ENCODE measurements at regions of chr3 and their contacts with region 1.

Region 1: DNA sequence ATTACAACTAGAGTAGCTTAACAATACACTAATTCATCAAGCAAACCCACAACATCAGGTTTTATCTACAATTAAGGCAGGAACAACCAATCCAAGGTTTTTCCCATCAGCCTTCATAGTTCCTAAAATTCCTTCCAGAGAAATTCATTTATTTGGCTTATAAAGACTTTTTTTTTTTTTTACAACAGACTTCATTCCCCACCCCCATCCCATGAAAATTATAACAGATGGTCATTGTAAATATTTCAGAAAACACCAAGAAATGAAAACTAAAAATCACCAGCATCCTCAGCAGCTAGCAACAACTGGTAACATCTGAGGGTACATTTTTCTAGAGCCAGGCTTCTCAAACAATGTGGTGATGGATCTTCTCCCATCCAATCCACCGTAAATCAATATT is 11.0 kb downstream of the SH3BP5 start:
- DNase-seq: no peak
- H3K4me3 ChIP-seq: no peak overlapping the region
- H3K27ac ChIP-seq: no peak overlapping the region
- H3K4me1 ChIP-seq: peaks cover 41% of the 10 kb centered on the region
- H3K27me3 ChIP-seq: no peaks in the 10 kb centered on the region
- CTCF ChIP-seq: no peak

Region 2: GRCh38 chr3:15345608-15346137 is 24.3 kb after region 1 on chr3:
- CTCF ChIA-PET with region 1: no interaction called
- POLR2A ChIA-PET with region 1: no interaction called
- intact Hi-C with region 1: no loop called
- DNase-seq: no peak
- H3K4me3 ChIP-seq: no peak overlapping the region
- H3K27ac ChIP-seq: no peak overlapping the region
- H3K4me1 ChIP-seq: peaks cover 5% of the 10 kb centered on the region
- H3K27me3 ChIP-seq: no peaks in the 10 kb centered on the region
- CTCF ChIP-seq: no peak

Region 3: DNA sequence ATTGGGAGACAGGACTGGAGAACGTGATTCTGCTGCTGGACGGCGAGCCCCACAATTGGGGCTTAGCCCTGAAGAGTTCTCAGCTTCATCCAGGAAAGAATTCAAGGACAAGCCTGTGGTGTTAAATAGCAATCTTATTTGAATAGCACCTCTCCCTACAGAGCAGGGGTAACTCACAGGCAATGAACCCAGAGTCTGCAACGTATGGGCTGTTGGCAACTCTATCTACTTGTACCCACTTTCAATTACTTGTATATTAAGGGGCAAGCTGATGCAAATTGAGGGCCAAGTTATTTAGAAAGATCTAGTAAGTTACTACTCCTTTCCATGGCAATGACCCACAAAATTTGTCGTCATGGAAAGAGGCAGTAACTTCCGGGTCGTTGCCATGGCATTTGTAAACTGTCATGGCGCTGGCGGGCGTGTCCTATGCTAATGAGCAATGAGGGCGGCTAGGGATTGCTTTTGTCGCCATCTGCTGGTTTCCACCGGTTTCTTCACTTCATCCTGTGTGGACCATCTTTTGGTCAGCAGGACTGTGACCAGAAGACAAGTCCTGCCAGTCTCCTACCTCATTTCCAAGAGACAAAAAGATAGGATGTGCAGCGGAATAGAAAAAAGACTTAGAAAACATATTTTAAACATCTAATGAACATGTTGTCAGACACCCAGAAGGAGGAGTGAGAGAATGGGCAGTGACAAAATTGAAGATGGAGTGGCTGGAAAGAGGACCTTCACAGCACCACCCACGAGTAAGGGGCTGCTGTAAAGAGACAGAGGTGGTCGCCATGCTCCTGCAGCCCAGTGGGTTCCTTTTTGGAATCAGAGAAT is 56.8 kb after region 1 on chr3:
- CTCF ChIA-PET with region 1: no interaction called
- POLR2A ChIA-PET with region 1: no interaction called
- intact Hi-C with region 1: no loop called
- DNase-seq: peak; percentile 96
- H3K4me3 ChIP-seq: no peak overlapping the region
- H3K27ac ChIP-seq: peak overlapping the region; percentile 62
- H3K4me1 ChIP-seq: peaks cover 3% of the 10 kb centered on the region
- H3K27me3 ChIP-seq: no peaks in the 10 kb centered on the region
- CTCF ChIP-seq: peak; percentile 85

Region 4: GRCh38 chr3:16264708-16265454 is 943.5 kb after region 1 on chr3 and contains the starts of genes DPH3 and OXNAD1:
- CTCF ChIA-PET with region 1: interaction called, 14 read pairs
- POLR2A ChIA-PET with region 1: no interaction called
- intact Hi-C with region 1: no loop called
- DNase-seq: peak; percentile 99
- H3K4me3 ChIP-seq: peak within 1 kb of the TSS; percentile 85
- H3K27ac ChIP-seq: peak within 1 kb of the TSS; percentile 89
- H3K4me1 ChIP-seq: peaks cover 12% of the 10 kb centered on the region
- H3K27me3 ChIP-seq: no peaks in the 10 kb centered on the region
- CTCF ChIP-seq: no peak
- total RNA-seq, gene DPH3: 24.0 and 26.4 TPM in 2 replicates
- total RNA-seq, gene OXNAD1: 19.8 and 21.5 TPM in 2 replicates